A549 (cell line): ENCODE measurements at regions of chr2 and their contacts with region 1.

Region 1: DNA sequence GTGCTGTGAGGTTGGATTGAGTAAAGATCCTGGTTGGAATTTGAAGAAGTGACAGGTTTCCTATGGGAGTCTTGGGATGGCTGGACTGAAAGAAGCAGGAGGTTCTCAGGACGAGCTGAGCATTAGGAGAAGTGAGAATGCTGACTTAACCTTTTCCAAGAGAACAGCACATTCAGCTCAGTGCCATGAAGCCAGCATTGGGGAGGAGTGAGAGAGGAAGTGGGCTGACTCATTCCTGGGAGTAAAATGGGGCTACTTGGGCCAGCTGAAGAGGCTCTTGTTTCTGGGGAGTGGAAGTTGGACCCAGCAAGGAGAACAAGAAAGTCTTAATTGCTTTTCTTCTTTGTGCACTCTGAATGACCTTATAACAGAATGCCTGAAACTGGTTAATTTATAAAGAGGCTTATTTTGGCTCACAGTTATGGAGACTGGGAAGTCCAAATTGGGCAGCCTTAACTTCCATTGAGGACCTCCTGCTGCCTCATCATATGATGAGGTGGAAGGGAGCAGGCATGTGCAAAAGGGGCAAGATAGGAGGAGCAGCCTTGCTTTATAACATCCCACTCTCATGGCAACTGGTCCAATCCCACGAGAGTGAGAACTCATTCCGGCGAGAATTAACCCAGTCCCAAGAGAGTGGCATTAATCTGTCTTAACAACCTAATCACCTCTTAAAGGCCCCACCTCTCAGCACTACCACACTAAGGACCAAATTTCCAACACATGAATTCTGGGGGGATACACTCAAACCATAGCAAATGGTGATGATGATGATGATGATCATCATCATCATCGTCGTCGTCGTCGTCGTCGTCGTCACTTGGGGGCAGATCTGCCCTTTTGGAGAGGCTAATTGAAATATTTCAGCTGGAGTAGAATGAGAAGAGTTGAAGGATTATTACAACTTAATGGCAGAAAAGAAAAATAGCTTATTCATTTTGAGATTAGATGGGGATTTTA is 26.1 kb downstream of the DGUOK start:
- DNase-seq: no peak
- ATAC-seq: no peak
- H3K4me3 ChIP-seq: no peak overlapping the region
- H3K27ac ChIP-seq: no peak overlapping the region
- H3K4me1 ChIP-seq: no peaks in the 10 kb centered on the region
- CTCF ChIP-seq: no peak
- EP300 ChIP-seq: no peak
- POLR2A ChIP-seq: no peak
- RAD21 ChIP-seq: no peak

Region 2: DNA sequence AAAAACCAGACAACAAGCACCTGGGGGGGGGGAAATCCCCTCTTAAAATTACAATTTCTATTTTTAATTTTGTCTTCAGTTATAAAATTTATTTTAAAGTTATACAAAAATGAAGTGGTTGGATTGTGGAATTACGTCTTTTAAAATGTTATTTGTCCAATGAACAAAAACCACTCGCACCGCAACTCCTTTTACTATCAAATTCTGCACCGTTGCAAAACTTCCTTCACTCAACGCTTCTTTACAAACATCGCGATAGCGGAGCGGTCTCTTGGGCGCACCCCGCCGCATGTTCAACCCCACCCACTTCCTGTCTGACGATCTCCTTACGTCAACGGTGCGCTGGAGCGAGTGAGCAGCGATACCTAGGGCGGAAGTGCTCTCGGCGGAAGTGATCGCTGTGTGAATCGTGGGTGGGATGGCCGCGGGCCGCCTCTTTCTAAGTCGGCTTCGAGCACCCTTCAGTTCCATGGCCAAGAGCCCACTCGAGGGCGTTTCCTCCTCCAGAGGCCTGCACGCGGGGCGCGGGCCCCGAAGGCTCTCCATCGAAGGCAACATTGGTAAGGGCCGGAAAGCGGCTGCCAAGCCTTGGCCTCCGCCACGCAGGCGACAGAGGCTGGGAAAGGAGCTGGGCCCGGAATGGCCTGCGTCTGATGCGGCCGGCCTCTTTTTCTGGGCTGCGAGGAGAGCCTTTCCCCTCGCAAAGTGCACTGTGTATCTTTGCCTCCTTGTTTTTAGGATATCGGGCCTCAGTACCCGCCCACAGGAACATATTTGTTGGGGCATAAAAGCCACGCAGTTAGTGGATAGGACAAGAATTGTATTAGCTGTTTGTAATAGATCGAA is 26.1 kb before region 1 on chr2 and contains the start of gene DGUOK:
- CTCF ChIA-PET with region 1: interaction called, 3 read pairs
- POLR2A ChIA-PET with region 1: interaction called, 10 read pairs
- DNase-seq: peak; percentile 96 to 100
- ATAC-seq: peak; percentile 99 to 100
- H3K4me3 ChIP-seq: peak within 1 kb of the TSS; percentile 67
- H3K27ac ChIP-seq: peak within 1 kb of the TSS; percentile 86 to 93
- H3K4me1 ChIP-seq: peaks cover 41% of the 10 kb centered on the region
- CTCF ChIP-seq: no peak
- EP300 ChIP-seq: no peak
- POLR2A ChIP-seq: peak; percentile 94
- RAD21 ChIP-seq: no peak
- polyA plus RNA-seq, gene DGUOK: 145 and 185 TPM in 2 replicates

Region 3: GRCh38 chr2:73965053-73965452 is 12.3 kb after region 1 on chr2:
- CTCF ChIA-PET with region 1: interaction called, 11 read pairs
- POLR2A ChIA-PET with region 1: no interaction called
- DNase-seq: no peak
- ATAC-seq: no peak
- H3K4me3 ChIP-seq: no peak overlapping the region
- H3K27ac ChIP-seq: no peak overlapping the region
- H3K4me1 ChIP-seq: no peaks in the 10 kb centered on the region
- CTCF ChIP-seq: no peak
- EP300 ChIP-seq: no peak
- POLR2A ChIP-seq: no peak
- RAD21 ChIP-seq: no peak